AG04450 (cell line): ENCODE measurements at regions of chr11 and their contacts with region 1.

Region 1: GRCh38 chr11:102410382-102410784 is 42.2 kb downstream of the TMEM123 start:
- DNase-seq: peak; percentile 15
- H3K4me3 ChIP-seq: no peak overlapping the region
- H3K27ac ChIP-seq: peak overlapping the region; percentile 24
- H3K27me3 ChIP-seq: no peaks in the 10 kb centered on the region
- CTCF ChIP-seq: no peak

Region 2: GRCh38 chr11:102451681-102452460 is 41.5 kb after region 1 on chr11:
- CTCF ChIA-PET with region 1: no interaction called
- POLR2A ChIA-PET with region 1: interaction called, 10 read pairs
- DNase-seq: no peak
- H3K4me3 ChIP-seq: peak overlapping the region; percentile 89
- H3K27ac ChIP-seq: peak overlapping the region; percentile 48
- H3K27me3 ChIP-seq: no peaks in the 10 kb centered on the region
- CTCF ChIP-seq: 0 out of 2 replicates have a peak, but pooled peaks have one; percentile 7